Left cardiac atrium (tissue), 4 donors: ENCODE measurements at regions of chr16 and their contacts with region 1.

Region 1: DNA sequence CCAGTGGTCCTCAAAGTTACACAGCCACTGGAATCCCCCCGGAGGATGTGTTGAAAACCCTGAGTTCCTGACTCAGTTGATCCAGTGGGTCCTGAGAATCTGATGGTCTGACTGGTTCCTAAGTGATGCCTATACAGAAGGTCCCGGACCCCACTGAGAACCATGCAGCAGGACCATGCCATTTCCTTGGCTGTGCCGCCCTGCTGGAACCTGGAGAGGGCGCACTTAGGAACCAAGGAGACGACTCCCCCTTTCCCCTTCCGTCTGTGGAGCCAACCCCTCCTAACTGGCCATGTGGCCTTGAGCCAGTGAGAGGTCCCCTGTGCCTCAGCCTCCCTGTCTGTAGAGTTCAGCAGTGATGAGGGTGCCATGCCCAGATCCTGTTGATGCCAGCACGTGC is 22.0 kb downstream of the C16orf74 start:
- DNase-seq: no peak
- ATAC-seq: no peak

Region 2: DNA sequence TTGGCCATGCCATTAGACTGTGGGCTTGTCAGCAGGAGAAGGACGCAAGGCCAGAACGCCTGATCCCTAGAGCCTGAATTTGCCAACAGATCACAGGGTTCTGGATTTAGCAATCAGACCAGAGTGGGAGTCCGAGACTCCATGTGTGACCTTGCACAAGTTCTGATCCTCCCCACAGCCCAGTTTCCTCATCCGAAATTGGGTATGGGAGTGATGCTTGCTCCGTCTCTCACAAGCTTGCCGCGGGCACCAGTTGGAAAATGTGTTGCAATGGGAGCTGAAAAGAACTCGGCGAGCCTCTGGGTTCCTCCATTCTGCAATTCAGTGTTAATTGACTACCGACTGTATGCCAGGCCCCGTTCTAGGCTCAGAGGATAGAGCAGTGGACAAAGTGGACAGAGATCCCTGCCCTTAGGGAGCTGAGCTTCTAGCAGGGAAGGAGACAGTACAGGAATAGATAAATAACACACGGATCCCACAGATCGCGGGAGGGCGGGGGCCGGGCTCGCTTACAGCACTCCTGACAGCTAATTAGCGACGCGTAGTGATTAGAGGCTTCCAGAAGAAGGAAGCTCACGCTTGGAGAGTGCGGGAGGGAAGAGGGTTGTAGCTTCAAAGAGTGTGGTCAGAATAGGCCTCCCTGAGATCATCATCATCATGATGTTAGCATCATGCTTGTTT is 466.2 kb before region 1 on chr16:
- intact Hi-C with region 1: loop called in 1 of 2 experiments (anchors 10 kb)
- DNase-seq: no peak
- ATAC-seq: peak in 1 of 2 donors; percentile 74